Activated B cell treated with CpG ODN at 0.5 μM for 24 hours (primary cell): ENCODE measurements at regions of chrX and their contacts with region 1.

Region 1: GRCh38 chrX:17930850-17931249 is 69.8 kb upstream of the RAI2 start:
- DNase-seq: no peak
- ATAC-seq: no peak
- H3K4me3 Mint-ChIP-seq: no peak overlapping the region
- H3K27ac Mint-ChIP-seq: no peak overlapping the region
- H3K4me1 Mint-ChIP-seq: no peaks in the 10 kb centered on the region
- H3K27me3 Mint-ChIP-seq: no peaks in the 10 kb centered on the region
- CTCF ChIP-seq: no peak

Region 2: GRCh38 chrX:17654116-17654515 is 276.7 kb before region 1 on chrX:
- CTCF ChIA-PET with region 1: no interaction called
- POLR2A ChIA-PET with region 1: no interaction called
- intact Hi-C with region 1: no loop called
- DNase-seq: no peak
- ATAC-seq: no peak
- H3K4me3 Mint-ChIP-seq: no peak overlapping the region
- H3K27ac Mint-ChIP-seq: no peak overlapping the region
- H3K4me1 Mint-ChIP-seq: no peaks in the 10 kb centered on the region
- H3K27me3 Mint-ChIP-seq: peaks cover 10% of the 10 kb centered on the region
- CTCF ChIP-seq: no peak

Region 3: GRCh38 chrX:17798921-17799320 is 131.9 kb before region 1 on chrX:
- CTCF ChIA-PET with region 1: no interaction called
- POLR2A ChIA-PET with region 1: interaction called, 11 read pairs
- intact Hi-C with region 1: no loop called
- DNase-seq: no peak
- ATAC-seq: no peak
- H3K4me3 Mint-ChIP-seq: no peak overlapping the region
- H3K27ac Mint-ChIP-seq: no peak overlapping the region
- H3K4me1 Mint-ChIP-seq: no peaks in the 10 kb centered on the region
- H3K27me3 Mint-ChIP-seq: no peaks in the 10 kb centered on the region
- CTCF ChIP-seq: no peak